BJ (cell line): ENCODE measurements at regions of chr2 and their contacts with region 1.

Region 1: GRCh38 chr2:182650704-182651103 is 65.4 kb upstream of the DNAJC10 start:
- DNase-seq: peak; percentile 27
- H3K4me3 ChIP-seq: no peak overlapping the region
- H3K27me3 ChIP-seq: no peaks in the 10 kb centered on the region
- CTCF ChIP-seq: peak; percentile 44

Region 2: GRCh38 chr2:182186132-182186735 is 464.5 kb before region 1 on chr2:
- CTCF ChIA-PET with region 1: interaction called, 68 read pairs
- POLR2A ChIA-PET with region 1: no interaction called
- DNase-seq: no peak
- H3K4me3 ChIP-seq: no peak overlapping the region
- H3K27me3 ChIP-seq: no peaks in the 10 kb centered on the region
- CTCF ChIP-seq: peak; percentile 44

Region 3: DNA sequence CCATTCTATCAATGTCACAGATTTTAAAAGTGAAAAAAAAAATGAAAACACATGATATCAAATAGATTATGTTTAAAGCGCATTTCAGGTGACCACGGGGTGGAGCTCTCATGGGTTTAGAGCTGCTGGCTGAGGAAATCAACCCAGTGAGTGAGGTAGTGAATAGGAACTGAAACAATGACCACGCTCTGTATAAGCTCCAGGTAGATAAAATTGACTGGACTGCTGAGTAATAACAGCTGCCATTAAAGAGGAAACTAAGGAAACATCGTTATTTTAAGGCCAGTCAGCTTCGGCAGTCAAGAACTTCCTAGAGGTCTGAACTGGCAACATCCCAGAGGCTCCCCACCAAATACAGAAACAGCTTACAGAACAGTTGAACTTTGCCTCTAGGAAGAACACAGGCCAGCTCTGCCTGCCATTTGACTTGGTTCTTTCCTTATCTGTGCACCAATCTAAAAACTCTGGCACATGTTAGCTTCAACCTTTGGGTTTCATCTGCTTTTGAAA is 409.8 kb before region 1 on chr2:
- CTCF ChIA-PET with region 1: interaction called, 29 read pairs
- POLR2A ChIA-PET with region 1: no interaction called
- DNase-seq: no peak
- H3K4me3 ChIP-seq: no peak overlapping the region
- H3K27me3 ChIP-seq: no peaks in the 10 kb centered on the region
- CTCF ChIP-seq: peak; percentile 51

Region 4: DNA sequence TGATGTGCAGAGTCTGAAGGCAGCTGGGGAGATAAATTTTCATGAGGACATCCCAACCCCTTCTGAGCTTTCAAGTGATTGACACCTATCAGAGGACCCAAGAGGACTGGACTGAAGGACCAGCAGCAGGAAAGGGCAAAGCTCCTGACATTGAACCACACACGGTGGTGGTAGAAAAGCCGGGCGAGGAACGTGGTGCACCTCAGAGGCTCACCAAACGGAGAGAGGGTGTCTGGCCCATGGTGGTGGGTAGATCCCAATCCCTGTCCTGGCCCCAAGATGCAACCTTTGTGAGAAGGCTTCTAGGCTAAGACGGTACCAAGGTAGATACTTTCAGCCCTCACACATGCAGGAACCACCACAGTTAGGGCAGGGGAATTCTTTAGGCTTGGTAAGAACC is 163.7 kb after region 1 on chr2:
- CTCF ChIA-PET with region 1: no interaction called
- POLR2A ChIA-PET with region 1: no interaction called
- DNase-seq: no peak
- H3K4me3 ChIP-seq: no peak overlapping the region
- H3K27me3 ChIP-seq: peaks cover 5% of the 10 kb centered on the region
- CTCF ChIP-seq: no peak